CD4-positive, alpha-beta T cell (primary cell): ENCODE measurements at regions of chr14 and their contacts with region 1.

Region 1: DNA sequence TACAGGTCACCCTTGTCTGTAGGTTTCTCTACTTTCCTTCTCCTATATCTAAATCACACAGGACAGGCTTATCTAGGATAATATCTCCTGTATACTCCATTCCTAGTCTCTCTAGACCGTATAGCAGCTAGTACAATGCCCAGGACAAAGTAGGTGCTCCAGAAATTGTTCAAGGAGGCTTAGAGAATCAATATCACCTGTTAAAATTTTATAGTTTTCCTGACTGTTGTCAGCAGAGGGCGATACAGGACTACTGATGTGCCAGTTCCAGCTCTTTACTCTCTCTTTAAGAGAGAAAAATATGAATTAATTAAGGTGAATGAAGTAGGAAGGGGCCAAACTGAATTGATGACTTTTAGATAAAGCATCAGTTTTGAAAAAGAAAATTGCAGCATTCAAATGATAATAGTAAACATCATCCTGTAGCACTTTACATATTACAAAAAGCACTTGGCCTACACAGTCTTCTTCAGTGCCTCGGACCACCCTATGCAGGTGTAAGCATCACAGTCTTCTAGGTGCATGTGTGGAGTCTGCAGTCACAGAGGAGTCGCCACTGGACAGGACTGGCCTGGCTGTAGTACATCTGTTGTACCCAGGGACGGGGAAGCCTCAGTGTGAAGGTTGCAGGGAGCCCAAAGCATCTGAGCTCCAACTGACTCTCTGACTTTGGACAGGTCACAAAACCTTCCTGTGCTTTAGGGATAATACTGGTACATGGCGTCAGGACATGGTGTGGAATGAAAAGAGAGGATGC is 61.9 kb upstream of the MAX start:
- DNase-seq: peak in 13 of 14 experiments; percentile 4 to 79 (median 21)
- ATAC-seq: peak; percentile 54
- H3K4me3 ChIP-seq: no peak overlapping the region
- H3K4me3 Mint-ChIP-seq: no peak overlapping the region
- H3K27ac ChIP-seq: no peak overlapping the region
- H3K27ac Mint-ChIP-seq: no peak overlapping the region
- H3K4me1 ChIP-seq: no peaks in the 10 kb centered on the region
- H3K4me1 Mint-ChIP-seq: peaks cover 5% of the 10 kb centered on the region
- H3K27me3 ChIP-seq: no peaks in the 10 kb centered on the region
- H3K27me3 Mint-ChIP-seq: no peaks in the 10 kb centered on the region
- CTCF ChIP-seq: peak; percentile 93

Region 2: GRCh38 chr14:64928239-64929013 is 235.8 kb before region 1 on chr14:
- CTCF ChIA-PET with region 1: no interaction called
- POLR2A ChIA-PET with region 1: no interaction called
- intact Hi-C with region 1: no loop called
- DNase-seq: peak in 3 of 14 experiments; percentile 56 to 80 (median 59)
- ATAC-seq: peak; percentile 80
- H3K4me3 ChIP-seq: peak overlapping the region; percentile 9
- H3K4me3 Mint-ChIP-seq: no peak overlapping the region
- H3K27ac ChIP-seq: peak overlapping the region; percentile 61 to 71
- H3K27ac Mint-ChIP-seq: no peak overlapping the region
- H3K4me1 ChIP-seq: peaks cover 41% of the 10 kb centered on the region
- H3K4me1 Mint-ChIP-seq: peaks cover 21% of the 10 kb centered on the region
- H3K27me3 ChIP-seq: no peaks in the 10 kb centered on the region
- H3K27me3 Mint-ChIP-seq: no peaks in the 10 kb centered on the region
- CTCF ChIP-seq: no peak

Region 3: GRCh38 chr14:65187421-65188049 is 23.3 kb after region 1 on chr14:
- CTCF ChIA-PET with region 1: no interaction called
- POLR2A ChIA-PET with region 1: no interaction called
- intact Hi-C with region 1: no loop called
- DNase-seq: no peak
- ATAC-seq: no peak
- H3K4me3 ChIP-seq: no peak overlapping the region
- H3K4me3 Mint-ChIP-seq: no peak overlapping the region
- H3K27ac ChIP-seq: no peak overlapping the region
- H3K27ac Mint-ChIP-seq: no peak overlapping the region
- H3K4me1 ChIP-seq: no peaks in the 10 kb centered on the region
- H3K4me1 Mint-ChIP-seq: no peaks in the 10 kb centered on the region
- H3K27me3 ChIP-seq: no peaks in the 10 kb centered on the region
- H3K27me3 Mint-ChIP-seq: no peaks in the 10 kb centered on the region
- CTCF ChIP-seq: no peak

Region 4: DNA sequence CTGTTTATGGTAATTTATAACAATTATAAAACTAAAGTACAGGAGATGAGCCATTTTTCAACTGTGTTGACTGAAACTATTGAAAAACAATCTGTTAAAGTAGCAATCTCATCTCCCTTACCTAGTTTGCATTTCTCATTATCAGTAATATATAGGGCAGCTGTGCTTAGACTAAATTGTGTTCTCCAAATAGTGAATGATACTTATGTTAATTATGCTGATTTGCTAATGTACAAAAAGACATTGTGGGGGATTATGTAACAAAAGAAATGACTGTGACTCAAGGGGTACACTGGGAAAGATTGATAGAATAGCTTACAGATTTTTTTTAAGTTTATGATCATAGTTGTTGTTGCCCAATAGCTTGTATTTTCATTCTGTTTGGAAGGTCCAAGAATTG is 455.9 kb after region 1 on chr14:
- CTCF ChIA-PET with region 1: no interaction called
- POLR2A ChIA-PET with region 1: no interaction called
- intact Hi-C with region 1: loop called in 1 of 2 experiments (anchors 10 kb)
- DNase-seq: no peak
- ATAC-seq: no peak
- H3K4me3 ChIP-seq: no peak overlapping the region
- H3K4me3 Mint-ChIP-seq: no peak overlapping the region
- H3K27ac ChIP-seq: no peak overlapping the region
- H3K27ac Mint-ChIP-seq: no peak overlapping the region
- H3K4me1 ChIP-seq: no peaks in the 10 kb centered on the region
- H3K4me1 Mint-ChIP-seq: peaks cover 5% of the 10 kb centered on the region
- H3K27me3 ChIP-seq: no peaks in the 10 kb centered on the region
- H3K27me3 Mint-ChIP-seq: no peaks in the 10 kb centered on the region
- CTCF ChIP-seq: no peak